Sigmoid colon (tissue), 7 donors: ENCODE measurements at regions of chr4 and their contacts with region 1.

Region 1: GRCh38 chr4:7960790-7961655 is 21.4 kb upstream of the AFAP1 start:
- DNase-seq: peak; percentile 94
- H3K4me3 ChIP-seq: no peak overlapping the region
- H3K27ac ChIP-seq: peak overlapping the region; percentile 87 to 94 (median 89)
- H3K4me1 ChIP-seq: peaks cover 0 to 52% (median 44%) of the 10 kb centered on the region in 4 donors
- H3K27me3 ChIP-seq: no peaks in the 10 kb centered on the region
- CTCF ChIP-seq: no peak
- EP300 ChIP-seq: peak in 2 of 4 donors; percentile 79 to 86
- POLR2A ChIP-seq: no peak

Region 2: GRCh38 chr4:7886007-7886973 is 74.7 kb before region 1 on chr4:
- intact Hi-C with region 1: loop called (anchors 5 kb)
- DNase-seq: peak; percentile 32
- H3K4me3 ChIP-seq: peak overlapping the region in 1 of 4 donors; percentile 11
- H3K27ac ChIP-seq: peak overlapping the region; percentile 82 to 93 (median 86)
- H3K4me1 ChIP-seq: peaks cover 0 to 59% (median 48%) of the 10 kb centered on the region in 4 donors
- H3K27me3 ChIP-seq: no peaks in the 10 kb centered on the region
- CTCF ChIP-seq: no peak
- EP300 ChIP-seq: peak in 1 of 4 donors; percentile 68
- POLR2A ChIP-seq: no peak

Region 3: DNA sequence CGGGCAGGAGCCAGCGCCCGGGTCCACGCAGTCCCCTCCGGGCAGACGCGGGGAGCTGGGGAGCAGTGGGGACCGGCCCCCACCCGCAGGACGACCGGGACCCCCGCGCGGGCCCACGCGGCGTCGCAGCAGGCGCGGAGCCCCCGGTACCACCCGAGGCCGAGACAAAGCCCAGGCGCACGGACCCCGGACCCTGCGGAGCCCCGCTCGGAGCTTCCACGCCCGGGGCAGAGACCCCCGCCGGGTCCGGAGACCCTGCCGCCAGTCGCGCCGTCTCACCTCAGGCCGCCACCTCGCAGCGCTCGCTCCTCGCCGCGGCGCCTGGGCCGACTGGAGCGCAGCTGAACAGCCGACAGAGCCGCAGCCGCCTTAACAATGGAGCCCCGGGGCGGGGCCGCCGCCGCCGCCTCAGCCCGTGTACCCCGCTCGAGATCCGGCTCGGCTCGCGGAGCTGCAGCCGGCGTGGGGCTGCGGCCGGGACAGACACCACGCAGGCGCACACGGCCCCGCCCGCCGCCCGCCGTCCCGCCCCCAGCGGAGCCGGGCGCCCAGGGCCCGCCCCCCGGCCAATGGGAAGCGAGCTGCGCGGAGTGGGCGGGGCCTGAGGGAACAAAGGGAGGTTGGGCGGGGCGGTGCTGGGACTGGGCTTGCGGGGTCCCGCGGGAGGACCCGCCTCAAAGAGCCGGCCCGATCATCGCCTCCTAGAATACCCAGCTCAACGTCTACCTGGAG is 21.5 kb before region 1 on chr4 and contains the start of gene AFAP1:
- intact Hi-C with region 1: loop called (anchors 2 kb)
- DNase-seq: peak; percentile 94
- H3K4me3 ChIP-seq: peak within 1 kb of the TSS; percentile 87 to 100 (median 93)
- H3K27ac ChIP-seq: peak within 1 kb of the TSS; percentile 97 to 100 (median 99)
- H3K4me1 ChIP-seq: peaks cover 0 to 42% (median 40%) of the 10 kb centered on the region in 4 donors
- H3K27me3 ChIP-seq: no peaks in the 10 kb centered on the region
- CTCF ChIP-seq: no peak
- EP300 ChIP-seq: no peak
- POLR2A ChIP-seq: peak; percentile 19 to 79
- total RNA-seq, gene AFAP1: 24.0 to 51.3 (median 38.2) TPM